Left ventricle myocardium superior (tissue), 1 donor: ENCODE measurements at regions of chr6 and their contacts with region 1.

Region 1: DNA sequence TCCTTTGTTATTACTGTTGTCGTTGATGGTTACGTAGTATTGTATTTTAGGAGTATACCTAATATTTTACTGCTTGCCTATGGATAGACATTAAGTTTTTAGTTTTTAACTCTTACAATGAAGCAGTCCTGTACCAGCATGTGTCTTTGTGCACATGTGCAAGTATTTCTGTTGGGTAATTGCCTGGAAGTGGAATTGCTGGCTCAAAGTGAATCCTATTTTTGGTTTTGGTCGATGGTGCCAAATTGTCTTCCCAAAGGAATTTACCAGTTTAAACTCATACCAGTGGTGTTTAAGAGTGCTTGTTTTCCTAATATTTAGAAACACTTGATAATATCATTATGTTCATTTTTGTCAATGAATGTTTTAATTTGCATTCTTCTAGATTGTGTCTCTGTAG is 75.5 kb downstream of the ANKS1A start:
- DNase-seq: no peak
- ATAC-seq: peak; percentile 70

Region 2: DNA sequence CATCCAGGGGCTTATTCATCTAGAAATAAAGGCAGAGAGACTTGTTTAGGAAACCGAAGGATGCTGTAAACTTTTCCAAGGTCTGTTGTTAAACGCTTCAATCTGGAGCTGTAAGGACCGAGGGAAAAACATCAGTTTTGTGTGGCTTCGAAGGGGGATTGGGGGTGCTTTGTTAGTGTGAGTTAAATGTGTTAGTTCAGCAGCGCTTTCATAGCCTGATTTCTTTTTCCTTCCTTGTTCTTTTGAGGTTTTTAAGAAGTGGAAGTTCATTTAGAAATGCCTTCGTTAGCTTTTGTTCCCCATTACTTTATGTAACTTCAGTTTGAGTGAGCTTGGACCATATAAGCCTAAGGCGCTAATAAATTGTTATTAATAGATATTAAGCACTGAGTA is 74.0 kb before region 1 on chr6:
- intact Hi-C with region 1: loop called (anchors 10 kb)
- DNase-seq: no peak
- ATAC-seq: no peak